Activated CD8-positive, alpha-beta T cell treated with anti-CD3 and anti-CD28 coated beads for 36 hours (primary cell): ENCODE measurements at regions of chr11 and their contacts with region 1.

Region 1: GRCh38 chr11:2951231-2952110 is 22.3 kb upstream of the PHLDA2 start:
- DNase-seq: no peak
- ATAC-seq: no peak
- H3K4me3 Mint-ChIP-seq: no peak overlapping the region
- H3K27ac Mint-ChIP-seq: peak overlapping the region; percentile 67
- H3K4me1 Mint-ChIP-seq: peaks cover 54% of the 10 kb centered on the region
- H3K27me3 Mint-ChIP-seq: no peaks in the 10 kb centered on the region
- CTCF ChIP-seq: no peak

Region 2: DNA sequence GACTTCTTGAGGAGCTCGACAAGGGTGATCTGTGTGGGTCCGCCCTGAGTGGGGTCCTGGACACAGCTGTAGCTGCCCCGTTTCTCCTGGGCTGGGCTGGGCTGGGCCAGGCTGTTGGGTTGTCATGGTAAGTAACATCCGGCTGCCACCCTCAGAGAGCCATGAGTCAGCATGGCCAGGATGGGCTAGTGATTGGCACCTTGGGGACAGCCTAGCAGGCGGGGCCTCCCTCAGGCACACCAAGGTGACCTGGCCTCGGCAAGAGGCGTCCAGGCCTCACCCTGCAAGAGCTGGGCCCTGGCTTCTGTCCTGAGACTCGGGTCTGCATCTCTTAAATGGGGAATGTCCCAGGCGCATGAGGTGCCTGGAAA is 10.9 kb before region 1 on chr11:
- CTCF ChIA-PET with region 1: interaction called, 8 read pairs
- POLR2A ChIA-PET with region 1: interaction called, 11 read pairs
- intact Hi-C with region 1: no loop called
- DNase-seq: peak; percentile 72
- ATAC-seq: peak; percentile 81
- H3K4me3 Mint-ChIP-seq: no peak overlapping the region
- H3K27ac Mint-ChIP-seq: no peak overlapping the region
- H3K4me1 Mint-ChIP-seq: peaks cover 24% of the 10 kb centered on the region
- H3K27me3 Mint-ChIP-seq: no peaks in the 10 kb centered on the region
- CTCF ChIP-seq: no peak

Region 3: GRCh38 chr11:3000082-3000961 is 48.9 kb after region 1 on chr11:
- CTCF ChIA-PET with region 1: no interaction called
- POLR2A ChIA-PET with region 1: no interaction called
- intact Hi-C with region 1: no loop called
- DNase-seq: no peak
- ATAC-seq: no peak
- H3K4me3 Mint-ChIP-seq: no peak overlapping the region
- H3K27ac Mint-ChIP-seq: no peak overlapping the region
- H3K4me1 Mint-ChIP-seq: peaks cover 4% of the 10 kb centered on the region
- H3K27me3 Mint-ChIP-seq: no peaks in the 10 kb centered on the region
- CTCF ChIP-seq: no peak